Heart right ventricle (tissue), 16 donors: ENCODE measurements at regions of chr10 and their contacts with region 1.

Region 1: DNA sequence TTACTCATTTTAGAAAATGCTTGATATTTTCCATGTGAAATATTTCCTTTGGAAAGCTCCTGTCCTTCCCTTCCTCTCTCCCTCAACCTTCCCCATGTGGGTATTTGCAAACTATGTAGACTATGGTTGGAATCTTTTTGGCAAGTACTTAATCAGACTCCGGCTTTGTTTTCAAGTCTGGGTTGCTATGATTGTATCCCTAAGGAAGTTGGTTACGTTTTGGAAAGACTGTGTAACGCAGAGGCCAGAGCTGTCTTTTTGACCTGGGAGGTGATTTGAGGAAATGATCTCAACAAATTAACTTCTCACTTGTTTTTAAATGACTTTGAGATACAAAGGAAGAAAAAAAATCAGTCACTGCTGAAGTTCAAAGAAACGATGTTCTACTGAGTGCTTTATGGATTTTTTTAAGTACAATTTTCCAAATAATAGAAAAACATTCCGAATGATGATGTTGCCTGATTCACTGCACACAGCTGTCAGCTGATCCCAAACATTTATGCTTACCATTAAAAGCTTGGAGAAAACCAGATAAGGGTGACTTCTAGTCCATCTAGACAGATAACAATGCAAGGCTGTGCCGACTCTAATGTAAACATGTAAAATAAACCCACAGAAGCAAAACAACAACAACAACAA is 145.5 kb upstream of the CELF2 start:
- DNase-seq: peak in 1 of 2 donors; percentile 65
- ATAC-seq: peak; percentile 91 to 99 (median 98)
- H3K4me3 ChIP-seq: no peak overlapping the region
- H3K27ac ChIP-seq: peak overlapping the region; percentile 66 to 91 (median 82)
- H3K4me1 ChIP-seq: peaks cover 0 to 32% (median 26%) of the 10 kb centered on the region in 9 donors
- H3K27me3 ChIP-seq: no peaks in the 10 kb centered on the region
- CTCF ChIP-seq: no peak

Region 2: DNA sequence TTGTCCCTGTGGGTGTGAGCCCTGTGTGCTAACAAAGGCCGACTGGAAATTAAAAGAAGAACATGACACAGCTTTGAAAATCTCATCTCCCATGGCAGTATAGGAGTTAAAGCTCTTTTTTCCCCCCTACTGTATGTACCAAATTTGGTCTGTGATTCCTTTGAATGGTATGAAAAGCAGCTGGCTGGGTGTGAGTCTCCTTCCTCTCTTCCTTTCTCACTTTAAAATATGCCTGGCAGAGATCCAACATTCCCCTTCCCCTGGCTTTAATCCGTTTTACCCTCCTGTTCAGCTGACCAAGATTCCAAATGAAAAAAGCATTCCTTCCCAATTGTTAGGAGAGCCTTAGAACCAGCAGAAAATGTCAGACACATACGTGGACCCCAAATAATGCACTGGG is 79.5 kb before region 1 on chr10:
- intact Hi-C with region 1: loop called in 3 of 10 experiments (anchors 5 to 10 kb)
- DNase-seq: peak in 1 of 2 donors; percentile 29
- ATAC-seq: peak in 4 of 8 donors; percentile 35 to 82 (median 47)
- H3K4me3 ChIP-seq: no peak overlapping the region
- H3K27ac ChIP-seq: peak overlapping the region in 6 of 10 donors; percentile 36 to 71 (median 54)
- H3K4me1 ChIP-seq: peaks cover 0 to 45% (median 32%) of the 10 kb centered on the region in 9 donors
- H3K27me3 ChIP-seq: no peaks in the 10 kb centered on the region
- CTCF ChIP-seq: no peak

Region 3: DNA sequence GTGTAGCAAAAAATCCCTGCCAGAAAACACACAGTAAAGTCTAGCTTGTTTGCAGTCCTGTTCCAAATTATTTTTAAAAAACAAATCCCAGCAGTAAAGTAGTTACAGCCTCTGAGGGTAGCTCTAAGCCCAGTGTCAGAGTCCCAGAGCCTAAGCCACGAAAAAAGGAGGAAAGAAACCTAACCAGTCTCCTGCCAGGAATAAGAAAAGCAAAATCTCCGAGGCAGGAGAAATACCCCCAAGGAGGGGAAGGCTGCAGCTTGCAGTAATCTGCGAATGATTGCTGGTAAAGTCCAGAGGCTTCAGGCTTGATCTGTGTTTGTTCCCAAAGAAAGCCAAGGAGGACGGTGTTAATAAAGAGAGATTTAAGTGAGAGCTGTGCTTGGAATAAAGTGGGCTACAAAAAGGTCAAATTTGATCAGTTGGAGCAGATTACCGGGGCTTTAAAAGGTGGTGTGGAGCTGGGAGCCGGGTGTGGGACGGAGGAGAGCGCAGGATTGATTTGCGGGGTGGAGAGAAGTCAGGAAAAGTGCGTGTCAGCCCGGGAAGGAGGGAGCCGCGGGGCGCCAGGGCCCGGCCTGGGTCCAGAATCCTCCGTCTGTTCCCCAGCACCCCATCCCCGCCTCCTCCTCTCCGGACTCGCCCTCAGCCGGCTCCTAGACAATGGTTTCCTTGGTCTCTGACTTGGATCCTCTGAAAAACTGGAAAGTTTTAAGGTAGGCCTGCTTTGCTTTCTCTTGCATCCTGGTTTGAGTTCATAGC is 73.9 kb before region 1 on chr10:
- intact Hi-C with region 1: loop called in 4 of 10 experiments (anchors 5 to 10 kb)
- DNase-seq: peak in 1 of 2 donors; percentile 25
- ATAC-seq: peak; percentile 29 to 70 (median 68)
- H3K4me3 ChIP-seq: peak overlapping the region in 9 of 10 donors; percentile 15 to 48 (median 32)
- H3K27ac ChIP-seq: peak overlapping the region; percentile 69 to 93 (median 84)
- H3K4me1 ChIP-seq: peaks cover 0 to 69% (median 32%) of the 10 kb centered on the region in 9 donors
- H3K27me3 ChIP-seq: no peaks in the 10 kb centered on the region
- CTCF ChIP-seq: peak in 2 of 9 donors; percentile 11 to 21

Region 4: DNA sequence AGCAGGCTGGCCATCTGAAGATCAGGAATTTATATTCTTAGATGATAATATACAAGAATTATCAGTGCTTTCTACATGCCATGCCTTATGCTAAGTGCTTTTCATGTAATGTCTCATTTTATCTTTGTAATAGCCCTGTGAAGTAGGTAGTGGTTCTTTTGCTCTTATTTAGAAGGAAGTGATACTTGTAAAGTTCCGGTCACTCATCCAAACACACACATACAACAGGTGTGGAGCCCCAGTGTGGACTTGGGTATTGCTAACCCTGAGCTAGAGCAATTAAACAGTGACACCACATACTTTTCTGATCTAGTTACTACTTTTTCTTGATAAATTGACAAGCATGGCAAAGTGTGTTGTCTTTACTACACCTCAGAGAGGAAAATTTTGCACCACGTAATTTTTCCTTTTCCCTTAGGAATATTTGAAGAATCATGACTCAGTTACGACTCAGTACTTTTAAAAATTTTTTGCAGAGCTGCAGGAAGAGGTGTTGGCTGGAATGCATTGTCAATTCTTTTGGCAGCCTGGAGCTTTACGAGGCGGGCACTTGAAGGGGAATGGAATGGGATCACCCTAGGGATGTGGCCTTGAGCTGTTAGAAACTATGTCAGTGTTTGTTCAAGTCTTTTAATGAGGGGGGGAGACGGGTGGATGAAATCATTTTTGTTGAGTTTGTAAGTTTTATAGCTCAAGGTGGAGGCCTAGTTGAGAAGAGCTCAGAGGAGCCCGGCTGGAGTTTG is 67.0 kb before region 1 on chr10:
- intact Hi-C with region 1: loop called in 1 of 10 experiments (anchors 5 kb)
- DNase-seq: no peak
- ATAC-seq: peak in 4 of 8 donors; percentile 26 to 68 (median 52)
- H3K4me3 ChIP-seq: no peak overlapping the region
- H3K27ac ChIP-seq: peak overlapping the region in 6 of 10 donors; percentile 20 to 50 (median 34)
- H3K4me1 ChIP-seq: peaks cover 0 to 45% (median 20%) of the 10 kb centered on the region in 9 donors
- H3K27me3 ChIP-seq: no peaks in the 10 kb centered on the region
- CTCF ChIP-seq: no peak

Region 5: GRCh38 chr10:10824591-10825148 is 47.5 kb before region 1 on chr10:
- intact Hi-C with region 1: loop called in 2 of 10 experiments (anchors 5 kb)
- DNase-seq: peak; percentile 26 to 45
- ATAC-seq: peak; percentile 68 to 93 (median 86)
- H3K4me3 ChIP-seq: peak overlapping the region in 2 of 10 donors; percentile 2 to 25
- H3K27ac ChIP-seq: peak overlapping the region; percentile 44 to 87 (median 78)
- H3K4me1 ChIP-seq: peaks cover 7 to 55% (median 32%) of the 10 kb centered on the region in 9 donors
- H3K27me3 ChIP-seq: no peaks in the 10 kb centered on the region
- CTCF ChIP-seq: peak in 3 of 9 donors; percentile 33 to 43 (median 39)

Region 6: DNA sequence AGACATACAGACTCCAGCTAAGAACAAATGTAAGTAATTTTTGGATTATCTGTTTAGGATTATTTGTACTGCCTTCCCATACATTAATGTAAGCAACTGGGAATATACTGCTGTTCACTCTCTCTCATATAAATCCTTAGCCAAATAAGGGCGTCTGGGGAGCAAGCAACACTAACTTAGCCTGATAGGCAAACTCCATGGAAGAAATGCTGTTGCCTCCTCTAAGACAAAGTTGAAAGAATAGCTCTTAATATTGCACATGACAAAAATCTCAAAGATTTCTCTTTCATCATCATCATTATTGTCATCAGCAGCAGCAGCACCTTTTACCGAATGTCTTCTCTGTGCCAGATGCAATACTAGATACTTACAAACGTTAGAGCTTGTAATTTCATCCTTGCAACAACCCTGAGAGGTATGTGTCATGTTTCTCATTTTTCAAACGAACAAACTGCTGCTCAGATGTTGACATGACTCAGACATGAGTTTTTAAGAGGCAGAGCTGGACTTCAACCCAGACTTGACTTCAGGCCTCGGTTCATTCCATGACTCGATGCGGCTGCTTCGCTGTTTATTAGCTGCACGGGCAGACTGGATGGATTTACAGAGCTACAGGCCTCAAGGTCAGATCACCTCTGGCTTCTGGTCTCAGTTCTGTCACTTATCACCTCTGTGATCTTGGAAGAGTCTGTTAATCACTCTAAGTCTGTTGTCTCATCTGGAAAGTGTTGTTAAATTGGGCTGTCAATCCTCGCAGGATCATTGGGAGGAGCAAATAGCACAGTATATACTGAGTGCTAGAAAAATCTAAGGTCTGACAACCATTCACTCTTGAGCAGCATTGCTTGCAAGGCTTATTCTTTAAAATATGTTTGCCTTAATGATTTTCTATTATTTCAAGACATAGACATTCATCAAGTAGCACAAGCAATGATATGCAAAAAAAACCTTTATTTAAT is 19.2 kb after region 1 on chr10:
- intact Hi-C with region 1: no loop called
- DNase-seq: no peak
- ATAC-seq: peak in 4 of 8 donors; percentile 14 to 70 (median 35)
- H3K4me3 ChIP-seq: no peak overlapping the region
- H3K27ac ChIP-seq: peak overlapping the region in 7 of 10 donors; percentile 2 to 72 (median 51)
- H3K4me1 ChIP-seq: peaks cover 0 to 38% (median 14%) of the 10 kb centered on the region in 9 donors
- H3K27me3 ChIP-seq: no peaks in the 10 kb centered on the region
- CTCF ChIP-seq: no peak

Region 7: DNA sequence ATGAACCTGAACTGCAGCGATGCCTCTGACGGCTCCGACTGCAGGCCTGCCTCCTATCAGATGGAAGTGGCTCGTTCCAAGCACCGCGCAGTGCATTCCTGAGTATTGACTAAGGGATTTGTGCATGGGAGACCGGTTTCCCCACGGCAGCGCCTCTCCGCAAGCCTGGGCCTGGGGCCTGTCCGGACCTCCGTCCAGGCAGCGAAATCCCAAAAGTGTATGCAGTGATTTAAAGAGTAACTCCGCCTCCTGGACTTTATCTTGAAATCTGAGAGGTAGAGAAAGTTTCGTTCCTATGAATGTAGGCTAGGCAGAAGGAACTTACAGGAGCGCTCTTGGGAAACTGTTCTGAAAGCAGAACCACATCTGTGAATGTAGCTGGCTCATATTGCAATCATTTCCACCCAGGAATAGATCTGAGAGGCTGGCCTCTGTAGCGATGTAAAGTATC is 39.3 kb after region 1 on chr10:
- intact Hi-C with region 1: loop called in 3 of 10 experiments (anchors 5 kb)
- DNase-seq: peak; percentile 58 to 64
- ATAC-seq: peak; percentile 58 to 84 (median 80)
- H3K4me3 ChIP-seq: peak overlapping the region in 9 of 10 donors; percentile 1 to 44 (median 35)
- H3K27ac ChIP-seq: peak overlapping the region; percentile 6 to 91 (median 82)
- H3K4me1 ChIP-seq: peaks cover 3 to 48% (median 37%) of the 10 kb centered on the region in 9 donors
- H3K27me3 ChIP-seq: no peaks in the 10 kb centered on the region
- CTCF ChIP-seq: no peak

Region 8: DNA sequence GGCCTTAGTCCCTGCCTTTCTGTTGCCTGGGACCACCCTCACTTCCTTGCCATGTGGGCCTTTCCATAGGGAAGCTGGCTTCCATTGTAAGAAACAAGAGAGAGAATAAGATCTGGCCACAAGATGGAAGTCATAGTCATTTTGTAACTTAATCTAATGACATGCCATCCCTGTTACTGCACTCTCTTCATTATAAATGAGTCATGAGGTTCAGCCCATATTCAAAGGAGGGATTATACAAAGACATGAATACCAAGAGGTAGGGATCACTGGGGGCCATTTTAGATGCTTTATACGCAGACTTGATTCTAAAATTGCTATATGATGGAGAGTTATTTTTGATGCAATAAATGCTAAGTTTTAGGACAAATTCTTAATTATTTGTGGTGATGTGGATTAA is 70.3 kb after region 1 on chr10:
- intact Hi-C with region 1: no loop called
- DNase-seq: no peak
- ATAC-seq: no peak
- H3K4me3 ChIP-seq: no peak overlapping the region
- H3K27ac ChIP-seq: no peak overlapping the region
- H3K4me1 ChIP-seq: no peaks in the 10 kb centered on the region
- H3K27me3 ChIP-seq: no peaks in the 10 kb centered on the region
- CTCF ChIP-seq: no peak

Region 9: DNA sequence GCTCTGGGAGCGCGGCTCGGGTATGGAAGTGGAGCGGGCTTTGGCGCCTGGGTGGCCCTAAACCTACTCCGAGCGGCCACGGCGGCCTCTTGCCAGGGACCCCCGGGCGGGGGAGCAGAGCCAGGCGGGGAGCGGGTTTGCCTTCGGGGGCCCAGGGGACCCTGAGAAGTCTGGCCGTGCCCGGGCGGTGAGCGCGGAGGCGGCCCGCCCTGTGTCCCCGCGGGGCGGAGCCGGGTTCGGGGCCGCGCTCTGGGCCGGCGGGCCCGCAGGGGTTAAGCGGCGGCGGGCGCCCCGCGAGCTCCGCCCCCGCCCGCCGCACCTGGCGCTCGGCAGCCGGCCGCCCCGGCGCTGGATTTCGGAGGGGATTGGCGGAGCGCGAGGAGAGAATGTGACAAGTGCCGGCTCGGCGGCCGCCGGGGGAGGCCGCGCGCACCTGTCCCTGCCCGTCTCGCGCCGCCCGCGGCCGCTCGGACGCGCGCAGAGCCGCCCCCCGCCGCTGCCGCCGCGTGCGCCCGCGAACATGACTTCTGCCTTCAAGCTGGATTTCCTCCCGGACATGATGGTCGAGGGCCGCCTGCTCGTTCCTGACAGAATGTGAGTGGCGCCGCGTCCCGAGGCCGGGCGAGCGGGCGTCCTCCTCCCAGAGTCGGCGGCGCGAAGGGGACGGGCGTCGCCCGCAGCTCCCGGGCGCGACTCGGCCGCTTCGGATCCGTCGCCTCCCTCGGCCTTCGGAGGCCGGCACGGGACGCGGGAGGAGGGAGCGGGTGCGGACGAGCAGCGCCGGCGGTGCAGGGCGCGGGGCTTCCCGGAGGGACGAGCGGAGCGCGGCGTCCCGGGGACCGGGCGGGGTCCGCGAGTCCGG is 145.6 kb after region 1 on chr10 and contains the start of gene CELF2:
- intact Hi-C with region 1: loop called in 2 of 10 experiments (anchors 5 to 10 kb)
- DNase-seq: peak; percentile 73 to 77
- ATAC-seq: peak; percentile 54 to 92 (median 70)
- H3K4me3 ChIP-seq: peak within 1 kb of the TSS; percentile 53 to 98 (median 72)
- H3K27ac ChIP-seq: peak within 1 kb of the TSS; percentile 87 to 97 (median 92)
- H3K4me1 ChIP-seq: peaks cover 4 to 85% (median 45%) of the 10 kb centered on the region in 9 donors
- H3K27me3 ChIP-seq: peaks cover 0 to 72% (median 0%) of the 10 kb centered on the region in 7 donors
- CTCF ChIP-seq: no peak
- total RNA-seq, gene CELF2: 61.9 to 90.9 (median 82.2) TPM